ENCODE measurements at regions of chr5 and their contacts with region 1.

Region 1: GRCh38 chr5:141475625-141476131 is at the start of gene PCDHGC3:
- DNase-seq: peak; percentile 95
- ATAC-seq: peak; percentile 97
- H3K4me3 ChIP-seq: peak within 1 kb of the TSS; percentile 54
- H3K27ac ChIP-seq: peak within 1 kb of the TSS; percentile 66
- H3K4me1 ChIP-seq: peaks cover 17% of the 10 kb centered on the region
- H3K27me3 ChIP-seq: no peaks in the 10 kb centered on the region
- CTCF ChIP-seq: peak; percentile 58
- POLR2A ChIP-seq: peak; percentile 57; the same call in 1 of the 2 replicates
- RAD21 ChIP-seq: peak; percentile 61
- total RNA-seq, gene PCDHGC3: 21.1 and 21.9 TPM in 2 replicates

Region 2: DNA sequence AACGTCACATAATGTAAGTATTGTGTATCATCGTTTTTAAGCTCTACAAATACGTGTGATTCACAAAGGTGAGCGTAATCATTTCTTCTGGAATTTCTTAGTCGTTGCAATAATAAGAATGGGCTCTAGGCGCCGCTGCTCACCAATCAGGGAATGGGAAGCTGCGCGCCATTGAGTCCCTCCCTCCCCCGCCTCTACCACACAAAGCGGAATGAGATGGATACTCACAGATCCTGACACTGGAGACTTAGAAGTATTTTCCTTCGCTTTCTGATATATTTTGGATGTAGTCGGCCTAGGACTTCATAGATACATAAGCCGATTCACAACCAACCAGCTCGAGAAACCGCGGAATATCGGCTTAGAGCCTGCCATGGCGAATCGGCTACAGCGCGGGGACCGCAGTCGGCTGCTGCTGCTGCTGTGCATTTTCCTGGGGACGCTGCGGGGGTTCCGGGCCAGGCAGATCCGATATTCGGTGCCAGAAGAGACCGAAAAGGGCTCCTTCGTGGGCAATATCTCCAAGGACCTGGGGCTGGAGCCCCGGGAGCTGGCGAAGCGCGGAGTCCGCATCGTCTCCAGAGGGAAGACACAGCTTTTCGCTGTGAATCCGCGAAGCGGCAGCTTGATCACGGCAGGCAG is 54.7 kb before region 1 on chr5 and contains the start of gene PCDHGA11:
- CTCF ChIA-PET with region 1: interaction called, 3 read pairs
- POLR2A ChIA-PET with region 1: no interaction called
- dilution Hi-C with region 1: no loop called
- in situ Hi-C with region 1: no loop called
- intact Hi-C with region 1: loop called (anchors 5 kb)
- DNase-seq: peak; percentile 63
- ATAC-seq: peak; percentile 57
- H3K4me3 ChIP-seq: peak within 1 kb of the TSS; percentile 54
- H3K27ac ChIP-seq: peak within 1 kb of the TSS; percentile 26; the same call in 1 of the 2 replicates
- H3K4me1 ChIP-seq: no peaks in the 10 kb centered on the region
- H3K27me3 ChIP-seq: no peaks in the 10 kb centered on the region
- CTCF ChIP-seq: peak; percentile 64
- POLR2A ChIP-seq: no peak
- RAD21 ChIP-seq: peak; percentile 70
- total RNA-seq, gene PCDHGA11: 5.4 and 5.8 TPM in 2 replicates

Region 3: GRCh38 chr5:141430332-141431113 is 45.2 kb before region 1 on chr5 and contains the start of gene PCDHGA12:
- CTCF ChIA-PET with region 1: no interaction called
- POLR2A ChIA-PET with region 1: no interaction called
- dilution Hi-C with region 1: no loop called
- in situ Hi-C with region 1: no loop called
- intact Hi-C with region 1: loop called (anchors 5 kb)
- DNase-seq: peak; percentile 87
- ATAC-seq: peak; percentile 85
- H3K4me3 ChIP-seq: peak within 1 kb of the TSS; percentile 23
- H3K27ac ChIP-seq: peak within 1 kb of the TSS; percentile 68
- H3K4me1 ChIP-seq: no peaks in the 10 kb centered on the region; the same call in 1 of the 2 replicates
- H3K27me3 ChIP-seq: no peaks in the 10 kb centered on the region
- CTCF ChIP-seq: peak; percentile 71
- POLR2A ChIP-seq: no peak
- RAD21 ChIP-seq: peak; percentile 75
- total RNA-seq, gene PCDHGA12: 8.8 and 9.7 TPM in 2 replicates

Measured in IMR-90 (cell line).